ENCODE measurements at regions of chr5 and their contacts with region 1.

Region 1: GRCh38 chr5:148957591-148958202 is 105.2 kb downstream of the SH3TC2 start:
- DNase-seq: no peak
- H3K4me3 ChIP-seq: no peak overlapping the region
- H3K27ac ChIP-seq: no peak overlapping the region
- H3K27me3 ChIP-seq: no peaks in the 10 kb centered on the region
- CTCF ChIP-seq: peak; percentile 90

Region 2: GRCh38 chr5:148005788-148006520 is 951.7 kb before region 1 on chr5:
- CTCF ChIA-PET with region 1: no interaction called
- POLR2A ChIA-PET with region 1: no interaction called
- DNase-seq: no peak
- H3K4me3 ChIP-seq: no peak overlapping the region
- H3K27ac ChIP-seq: no peak overlapping the region
- H3K27me3 ChIP-seq: no peaks in the 10 kb centered on the region
- CTCF ChIP-seq: no peak

Region 3: DNA sequence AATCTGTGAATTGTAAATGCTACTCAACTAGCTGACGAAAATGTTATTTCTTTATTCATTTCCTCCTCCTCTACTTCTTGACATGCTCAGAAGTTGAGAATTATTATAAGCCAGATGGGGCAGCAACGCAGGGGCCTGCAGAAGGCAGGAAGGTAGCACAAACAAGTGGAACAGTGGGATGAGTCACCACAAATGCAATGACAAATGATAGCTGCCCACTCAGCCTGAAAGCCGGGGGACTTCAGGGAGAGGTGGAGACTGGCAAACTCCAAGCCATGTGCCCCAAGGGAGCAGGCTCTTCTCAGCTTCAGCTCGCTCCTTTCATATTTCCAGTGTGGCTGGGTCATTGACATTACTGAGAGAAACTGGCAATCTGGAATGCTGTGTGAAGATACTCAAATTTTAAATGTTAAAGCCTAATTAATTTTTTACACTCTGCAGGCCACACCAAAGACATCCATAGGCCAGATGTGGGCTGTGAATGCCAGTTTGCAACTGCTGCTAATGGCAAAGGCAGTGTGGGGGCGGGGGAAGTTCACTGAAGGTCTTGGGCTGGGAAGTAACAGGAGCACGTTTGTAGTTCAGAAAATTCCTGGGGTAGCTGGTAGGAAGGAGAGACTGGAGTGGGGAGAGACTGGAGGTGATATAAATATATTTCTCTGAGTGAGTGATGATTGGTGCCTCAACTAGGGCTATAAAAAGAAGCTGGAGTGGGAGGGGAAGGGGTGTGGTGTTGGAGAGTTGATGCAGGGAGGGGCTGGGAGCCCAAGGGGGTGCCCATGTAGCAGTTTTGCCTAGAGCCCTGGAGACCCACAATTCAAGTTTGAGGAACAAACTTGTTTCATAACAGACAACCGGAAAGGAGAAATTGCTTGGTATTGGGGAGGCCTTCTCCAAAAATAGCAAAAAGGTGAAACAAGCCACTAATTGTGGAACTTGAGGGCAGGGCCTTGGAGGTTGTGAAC is 152.1 kb before region 1 on chr5:
- CTCF ChIA-PET with region 1: interaction called, 10 read pairs
- POLR2A ChIA-PET with region 1: no interaction called
- DNase-seq: no peak
- H3K4me3 ChIP-seq: no peak overlapping the region
- H3K27ac ChIP-seq: no peak overlapping the region
- H3K27me3 ChIP-seq: no peaks in the 10 kb centered on the region
- CTCF ChIP-seq: no peak

Region 4: GRCh38 chr5:148912714-148913398 is 44.8 kb before region 1 on chr5:
- CTCF ChIA-PET with region 1: interaction called, 37 read pairs
- POLR2A ChIA-PET with region 1: no interaction called
- DNase-seq: peak; percentile 91
- H3K4me3 ChIP-seq: peak overlapping the region; percentile 34
- H3K27ac ChIP-seq: peak overlapping the region; percentile 99
- H3K27me3 ChIP-seq: no peaks in the 10 kb centered on the region
- CTCF ChIP-seq: peak; percentile 37

Region 5: DNA sequence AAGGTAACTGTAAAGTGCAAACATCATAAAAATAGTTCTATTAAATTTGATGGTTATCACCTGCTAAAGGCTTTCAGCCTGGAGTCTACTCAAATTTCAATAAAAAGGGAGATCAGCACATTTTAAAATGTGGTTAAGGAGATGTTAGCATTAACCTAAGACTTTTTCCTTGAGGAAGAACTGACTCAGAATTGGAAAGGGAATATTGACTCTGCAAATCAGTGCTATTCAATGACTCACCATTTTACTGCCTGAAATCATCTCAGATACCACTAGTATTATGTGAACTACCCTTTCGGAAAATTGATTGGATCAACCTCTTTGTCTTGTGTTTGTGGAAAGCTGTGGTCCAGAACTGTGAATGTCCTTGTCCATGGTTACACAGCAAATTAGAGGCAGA is 18.0 kb before region 1 on chr5:
- CTCF ChIA-PET with region 1: interaction called, 25 read pairs
- POLR2A ChIA-PET with region 1: no interaction called
- DNase-seq: no peak
- H3K4me3 ChIP-seq: no peak overlapping the region
- H3K27ac ChIP-seq: no peak overlapping the region
- H3K27me3 ChIP-seq: no peaks in the 10 kb centered on the region
- CTCF ChIP-seq: no peak

Region 6: DNA sequence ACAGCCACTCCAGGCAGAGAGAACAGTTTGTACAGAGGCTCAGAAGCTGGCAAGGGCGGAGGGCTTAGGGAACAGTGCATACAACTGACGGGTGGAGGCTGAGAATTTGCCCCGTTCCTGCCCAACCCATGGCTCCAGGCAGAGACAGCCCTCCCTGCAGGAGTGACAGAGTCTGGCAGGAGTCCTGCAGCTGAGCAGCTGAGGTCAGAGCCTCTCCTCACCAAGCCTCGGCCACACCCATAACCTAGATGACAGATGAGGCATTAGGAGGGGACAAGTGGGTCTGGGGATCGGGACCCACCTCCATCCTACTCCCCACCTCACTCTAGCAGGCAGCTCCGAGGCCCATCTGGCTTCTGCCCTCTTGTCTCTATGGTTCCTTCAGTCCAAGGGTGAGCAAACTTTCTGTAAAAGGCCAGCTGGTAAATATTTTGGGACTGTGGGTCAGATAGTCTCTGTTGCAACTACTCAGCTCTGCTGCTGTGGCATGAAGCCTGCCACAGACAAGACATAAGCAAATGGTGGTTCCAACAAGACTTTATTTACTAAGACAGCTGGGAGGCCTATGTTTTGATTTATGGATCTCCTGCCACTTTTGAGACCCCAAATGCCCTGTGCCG is 21.5 kb after region 1 on chr5:
- CTCF ChIA-PET with region 1: interaction called, 13 read pairs
- POLR2A ChIA-PET with region 1: no interaction called
- DNase-seq: no peak
- H3K4me3 ChIP-seq: no peak overlapping the region
- H3K27ac ChIP-seq: no peak overlapping the region
- H3K27me3 ChIP-seq: no peaks in the 10 kb centered on the region
- CTCF ChIP-seq: no peak

Region 7: GRCh38 chr5:148991606-148992005 is 33.9 kb after region 1 on chr5:
- CTCF ChIA-PET with region 1: interaction called, 11 read pairs
- POLR2A ChIA-PET with region 1: no interaction called
- DNase-seq: no peak
- H3K4me3 ChIP-seq: no peak overlapping the region
- H3K27ac ChIP-seq: no peak overlapping the region
- H3K27me3 ChIP-seq: no peaks in the 10 kb centered on the region
- CTCF ChIP-seq: no peak

Region 8: GRCh38 chr5:149114403-149115312 is 157.0 kb after region 1 on chr5:
- CTCF ChIA-PET with region 1: interaction called, 20 read pairs
- POLR2A ChIA-PET with region 1: no interaction called
- DNase-seq: peak; percentile 69
- H3K4me3 ChIP-seq: no peak overlapping the region
- H3K27ac ChIP-seq: no peak overlapping the region
- H3K27me3 ChIP-seq: no peaks in the 10 kb centered on the region
- CTCF ChIP-seq: peak; percentile 87

Measured in AG04450 (cell line).